Right ventricle myocardium superior (tissue), 1 donor: ENCODE measurements at regions of chr1 and their contacts with region 1.

Region 1: DNA sequence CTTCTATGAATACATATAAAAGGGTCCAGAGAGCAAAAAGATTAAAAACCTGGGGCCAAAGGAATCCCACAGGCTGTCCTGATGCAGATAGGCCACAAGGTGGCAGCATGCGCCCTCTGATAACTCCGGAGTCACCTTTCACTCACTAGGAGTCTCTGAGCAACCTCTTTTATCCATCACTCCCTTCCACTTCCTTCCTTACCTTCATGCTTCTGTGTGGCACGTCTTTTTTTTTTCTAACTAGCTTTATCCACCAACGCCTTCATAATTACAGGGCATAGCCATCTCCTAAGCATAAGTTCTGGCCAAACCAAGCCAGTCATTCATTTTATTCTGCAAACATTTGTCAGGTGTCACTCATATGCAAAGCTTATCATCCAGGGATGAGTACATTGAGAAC is 3.9 kb upstream of the PGLYRP4 start:
- DNase-seq: peak; percentile 79
- ATAC-seq: peak; percentile 81

Region 2: GRCh38 chr1:153494976-153495535 is 142.5 kb after region 1 on chr1:
- intact Hi-C with region 1: loop called (anchors 2 kb)
- DNase-seq: peak; percentile 88
- ATAC-seq: peak; percentile 72